ENCODE measurements at regions of chr3 and their contacts with region 1.

Region 1: GRCh38 chr3:39990532-39990931 is 181.1 kb downstream of the MYRIP start:
- DNase-seq: peak; percentile 36
- H3K4me3 Mint-ChIP-seq: no peak overlapping the region
- H3K27ac Mint-ChIP-seq: no peak overlapping the region
- H3K4me1 Mint-ChIP-seq: no peaks in the 10 kb centered on the region
- H3K27me3 Mint-ChIP-seq: no peaks in the 10 kb centered on the region
- CTCF ChIP-seq: peak; percentile 41

Region 2: DNA sequence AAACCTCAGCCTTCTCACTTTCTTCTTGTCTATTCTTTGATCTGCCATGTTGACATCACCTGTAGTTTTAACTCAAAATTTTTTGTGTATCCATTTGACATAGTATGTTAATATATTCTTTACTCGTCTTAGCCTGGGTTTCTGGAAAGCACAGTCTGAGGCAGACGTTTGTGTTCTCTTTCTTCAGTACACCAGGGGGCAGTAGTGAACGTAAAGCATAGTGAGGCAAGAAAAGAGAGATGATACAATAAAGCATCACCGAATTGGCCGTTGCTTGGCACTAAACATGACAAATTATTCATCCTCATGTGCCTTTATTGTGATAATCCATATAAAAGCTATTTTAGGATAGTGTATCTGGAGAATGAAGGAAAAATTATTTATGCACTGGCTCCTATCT is 322.1 kb before region 1 on chr3:
- CTCF ChIA-PET with region 1: no interaction called
- intact Hi-C with region 1: loop called (anchors 1 kb)
- DNase-seq: peak; percentile 15
- H3K4me3 Mint-ChIP-seq: no peak overlapping the region
- H3K27ac Mint-ChIP-seq: no peak overlapping the region
- H3K4me1 Mint-ChIP-seq: no peaks in the 10 kb centered on the region
- H3K27me3 Mint-ChIP-seq: no peaks in the 10 kb centered on the region
- CTCF ChIP-seq: peak; percentile 53

Region 3: DNA sequence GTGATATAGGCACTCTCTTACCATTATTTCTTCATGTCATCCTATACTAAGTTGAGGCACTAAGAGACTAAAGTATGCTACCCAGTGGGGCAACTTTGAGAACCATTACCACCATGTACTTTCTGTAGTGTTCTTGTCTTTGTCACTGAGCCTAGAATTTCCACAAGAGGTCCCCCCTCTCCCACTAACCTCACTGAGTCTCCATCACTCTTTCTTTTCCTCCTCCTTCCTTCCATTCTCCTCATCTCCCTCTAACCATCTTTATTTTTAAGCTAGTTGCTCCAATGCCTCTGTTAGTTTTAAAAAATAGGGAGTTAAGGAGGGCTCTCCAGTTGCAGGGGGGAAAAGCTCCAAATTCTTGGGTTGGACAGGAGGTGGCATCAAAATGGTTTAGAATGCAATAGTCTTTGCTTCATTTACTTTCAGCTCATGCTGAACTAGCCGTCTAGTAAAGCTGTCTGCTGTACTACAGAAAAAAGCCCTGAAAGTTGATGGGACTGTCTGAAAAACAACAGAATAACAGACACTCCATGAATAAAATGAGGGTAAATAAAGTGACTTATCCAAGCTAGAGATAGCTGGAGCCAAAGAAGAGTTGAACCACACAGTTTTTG is 266.2 kb before region 1 on chr3:
- CTCF ChIA-PET with region 1: interaction called, 3 read pairs
- intact Hi-C with region 1: loop called (anchors 2 kb)
- DNase-seq: peak; percentile 29
- H3K4me3 Mint-ChIP-seq: no peak overlapping the region
- H3K27ac Mint-ChIP-seq: no peak overlapping the region
- H3K4me1 Mint-ChIP-seq: no peaks in the 10 kb centered on the region
- H3K27me3 Mint-ChIP-seq: no peaks in the 10 kb centered on the region
- CTCF ChIP-seq: no peak

Region 4: DNA sequence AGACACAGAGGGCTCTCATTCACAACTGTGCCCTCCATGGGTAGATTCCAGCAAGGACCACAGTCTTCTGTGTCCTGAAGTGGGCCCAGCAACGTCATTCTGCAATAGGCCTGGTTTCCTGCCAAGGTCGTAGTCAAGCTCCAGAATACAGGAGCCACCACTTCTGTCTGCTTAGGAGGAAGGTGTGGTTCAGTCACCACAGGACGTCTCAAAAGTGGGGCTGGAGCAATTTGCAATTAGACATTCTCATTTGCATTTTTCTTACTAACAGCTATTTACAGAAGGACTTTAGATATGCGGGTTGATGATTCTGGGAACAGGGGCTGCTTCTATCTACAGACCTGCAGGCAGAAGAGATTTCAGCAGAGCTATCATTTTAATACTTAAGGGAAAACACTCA is 239.8 kb before region 1 on chr3:
- CTCF ChIA-PET with region 1: no interaction called
- intact Hi-C with region 1: no loop called
- DNase-seq: no peak
- H3K4me3 Mint-ChIP-seq: no peak overlapping the region
- H3K27ac Mint-ChIP-seq: no peak overlapping the region
- H3K4me1 Mint-ChIP-seq: peaks cover 49% of the 10 kb centered on the region
- H3K27me3 Mint-ChIP-seq: no peaks in the 10 kb centered on the region
- CTCF ChIP-seq: no peak

Region 5: DNA sequence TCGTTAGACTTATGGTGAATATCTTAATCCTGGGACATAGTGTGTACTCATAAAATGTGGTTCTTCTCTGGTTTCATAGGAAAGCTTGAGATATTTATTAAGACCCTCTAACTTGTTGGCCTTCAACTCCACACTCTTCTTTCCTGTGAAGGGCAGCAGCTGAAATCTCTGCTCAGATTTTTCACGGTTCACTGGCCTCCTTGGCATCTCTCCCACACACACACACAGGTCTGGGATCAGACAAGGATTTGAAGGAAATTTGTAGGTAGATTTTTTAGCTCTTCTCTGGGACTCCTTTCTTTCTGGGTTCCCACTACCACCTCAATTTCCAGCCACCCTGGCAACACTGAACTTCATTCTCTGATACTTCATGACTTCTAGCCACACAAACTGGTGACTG is 111.0 kb before region 1 on chr3:
- CTCF ChIA-PET with region 1: no interaction called
- intact Hi-C with region 1: no loop called
- DNase-seq: no peak
- H3K4me3 Mint-ChIP-seq: no peak overlapping the region
- H3K27ac Mint-ChIP-seq: no peak overlapping the region
- H3K4me1 Mint-ChIP-seq: no peaks in the 10 kb centered on the region
- H3K27me3 Mint-ChIP-seq: no peaks in the 10 kb centered on the region
- CTCF ChIP-seq: no peak

Region 6: DNA sequence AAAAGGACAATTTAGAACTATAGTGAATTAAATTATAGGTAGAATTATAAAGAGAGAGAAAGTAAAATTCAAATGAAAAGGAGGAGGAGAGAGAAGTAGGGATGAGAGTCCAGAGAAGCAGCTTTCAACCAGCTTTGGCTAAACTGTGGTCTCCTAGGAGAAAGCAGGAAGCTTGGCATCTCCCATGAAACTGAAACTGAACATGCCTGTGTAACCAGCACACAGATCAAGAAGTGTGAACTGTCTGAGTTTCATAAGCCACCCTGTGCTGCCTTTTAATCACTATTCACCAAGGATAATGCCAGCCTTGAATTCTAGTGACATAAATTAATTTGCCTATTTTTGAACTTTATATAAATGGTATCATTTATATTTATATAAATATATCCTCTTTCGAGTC is 52.7 kb before region 1 on chr3:
- CTCF ChIA-PET with region 1: no interaction called
- intact Hi-C with region 1: no loop called
- DNase-seq: no peak
- H3K4me3 Mint-ChIP-seq: no peak overlapping the region
- H3K27ac Mint-ChIP-seq: no peak overlapping the region
- H3K4me1 Mint-ChIP-seq: peaks cover 8% of the 10 kb centered on the region
- H3K27me3 Mint-ChIP-seq: no peaks in the 10 kb centered on the region
- CTCF ChIP-seq: no peak